H1 (cell line): ENCODE measurements at regions of chr1 and their contacts with region 1.

Region 1: GRCh38 chr1:171929121-171929520 is 87.8 kb downstream of the DNM3 start:
- DNase-seq: no peak
- H3K4me3 ChIP-seq: no peak overlapping the region
- H3K27ac ChIP-seq: no peak overlapping the region
- H3K4me1 ChIP-seq: peaks cover 0 to 6% (median 1%) of the 10 kb centered on the region in 4 experiments; a peak in 1 of 7 replicates
- H3K27me3 ChIP-seq: no peaks in the 10 kb centered on the region
- CTCF ChIP-seq: peak; percentile 2 to 39 (median 10); a peak in 3 of 4 replicates
- EP300 ChIP-seq: no peak
- POLR2A ChIP-seq: no peak
- RAD21 ChIP-seq: no peak

Region 2: DNA sequence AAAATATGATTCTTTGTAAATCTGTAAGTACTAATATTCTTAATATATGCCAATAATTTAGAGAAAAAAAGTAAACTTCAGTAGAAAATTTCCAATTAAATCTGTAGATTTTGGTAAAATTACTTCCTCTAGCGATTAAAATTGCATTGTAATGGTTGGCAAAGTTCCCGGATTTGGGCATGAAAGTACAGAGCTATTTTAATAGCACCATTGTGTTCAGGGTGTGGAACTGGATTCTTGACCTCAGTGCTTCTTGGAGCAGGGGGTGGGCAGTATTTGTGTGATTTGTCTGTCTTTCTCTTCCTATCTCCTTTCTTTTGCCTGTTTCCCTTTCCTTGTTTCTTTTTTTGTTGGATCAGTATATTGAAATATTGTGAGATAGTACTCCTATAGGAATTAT is 15.7 kb before region 1 on chr1:
- CTCF ChIA-PET with region 1: interaction called, 12 read pairs
- POLR2A ChIA-PET with region 1: no interaction called
- DNase-seq: no peak
- H3K4me3 ChIP-seq: no peak overlapping the region
- H3K27ac ChIP-seq: no peak overlapping the region
- H3K4me1 ChIP-seq: peaks cover 0 to 8% (median 7%) of the 10 kb centered on the region in 4 experiments; a peak in 3 of 7 replicates
- H3K27me3 ChIP-seq: no peaks in the 10 kb centered on the region
- CTCF ChIP-seq: no peak
- EP300 ChIP-seq: no peak
- POLR2A ChIP-seq: no peak
- RAD21 ChIP-seq: no peak

Region 3: DNA sequence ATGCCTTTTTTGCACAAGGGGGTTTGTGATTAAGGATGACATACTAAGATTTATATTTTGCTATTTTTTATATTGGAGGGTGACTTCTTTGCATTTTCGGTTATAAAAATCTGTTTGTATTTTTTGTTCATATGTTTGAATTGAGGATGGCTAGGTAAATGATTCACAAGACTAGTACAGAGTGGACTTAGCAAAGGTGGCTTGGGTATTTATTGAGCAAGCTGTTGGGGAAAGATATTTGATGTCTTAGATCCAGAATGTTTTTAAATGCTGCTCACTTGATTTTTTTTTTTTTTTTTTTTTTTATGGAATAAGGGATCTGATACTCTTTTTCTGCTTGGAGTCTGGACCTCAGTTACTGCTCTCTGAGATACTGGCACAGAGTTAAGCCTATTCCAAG is 12.8 kb after region 1 on chr1:
- CTCF ChIA-PET with region 1: interaction called, 21 read pairs
- POLR2A ChIA-PET with region 1: no interaction called
- DNase-seq: no peak
- H3K4me3 ChIP-seq: no peak overlapping the region
- H3K27ac ChIP-seq: no peak overlapping the region
- H3K4me1 ChIP-seq: peaks cover 0 to 16% (median 13%) of the 10 kb centered on the region in 4 experiments; a peak in 5 of 7 replicates
- H3K27me3 ChIP-seq: no peaks in the 10 kb centered on the region; a peak in 1 of 7 replicates
- CTCF ChIP-seq: no peak
- EP300 ChIP-seq: no peak
- POLR2A ChIP-seq: no peak
- RAD21 ChIP-seq: no peak

Region 4: GRCh38 chr1:171965777-171966176 is 36.7 kb after region 1 on chr1:
- CTCF ChIA-PET with region 1: interaction called, 12 read pairs
- POLR2A ChIA-PET with region 1: no interaction called
- DNase-seq: no peak
- H3K4me3 ChIP-seq: no peak overlapping the region
- H3K27ac ChIP-seq: no peak overlapping the region
- H3K4me1 ChIP-seq: peaks cover 2 to 12% (median 7%) of the 10 kb centered on the region in 4 experiments; a peak in 6 of 7 replicates
- H3K27me3 ChIP-seq: no peaks in the 10 kb centered on the region
- CTCF ChIP-seq: no peak
- EP300 ChIP-seq: no peak
- POLR2A ChIP-seq: no peak
- RAD21 ChIP-seq: no peak

Region 5: DNA sequence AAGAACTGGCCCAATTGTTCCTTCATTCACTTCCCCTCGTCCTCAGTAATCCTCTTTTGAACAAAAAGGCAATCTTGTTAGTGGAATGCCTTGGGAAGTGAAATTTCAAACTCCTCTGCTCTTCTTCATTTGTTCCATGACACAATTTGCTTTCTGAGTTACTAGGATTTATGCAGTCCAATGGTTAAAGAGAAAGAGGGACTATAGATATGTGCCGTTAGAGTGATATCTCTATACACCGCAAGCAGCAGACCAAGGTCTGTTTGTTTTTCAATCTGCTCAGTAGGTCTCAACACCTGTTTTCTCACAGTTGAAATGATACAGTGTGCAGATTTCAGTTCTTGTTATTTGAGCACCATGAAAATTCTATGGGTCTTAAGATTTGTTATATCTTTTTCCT is 156.2 kb after region 1 on chr1:
- CTCF ChIA-PET with region 1: no interaction called
- POLR2A ChIA-PET with region 1: no interaction called
- DNase-seq: no peak
- H3K4me3 ChIP-seq: no peak overlapping the region
- H3K27ac ChIP-seq: no peak overlapping the region
- H3K4me1 ChIP-seq: no peaks in the 10 kb centered on the region
- H3K27me3 ChIP-seq: no peaks in the 10 kb centered on the region
- CTCF ChIP-seq: no peak
- EP300 ChIP-seq: no peak
- POLR2A ChIP-seq: no peak
- RAD21 ChIP-seq: no peak